PC-9 (cell line): ENCODE measurements at regions of chr2 and their contacts with region 1.

Region 1: DNA sequence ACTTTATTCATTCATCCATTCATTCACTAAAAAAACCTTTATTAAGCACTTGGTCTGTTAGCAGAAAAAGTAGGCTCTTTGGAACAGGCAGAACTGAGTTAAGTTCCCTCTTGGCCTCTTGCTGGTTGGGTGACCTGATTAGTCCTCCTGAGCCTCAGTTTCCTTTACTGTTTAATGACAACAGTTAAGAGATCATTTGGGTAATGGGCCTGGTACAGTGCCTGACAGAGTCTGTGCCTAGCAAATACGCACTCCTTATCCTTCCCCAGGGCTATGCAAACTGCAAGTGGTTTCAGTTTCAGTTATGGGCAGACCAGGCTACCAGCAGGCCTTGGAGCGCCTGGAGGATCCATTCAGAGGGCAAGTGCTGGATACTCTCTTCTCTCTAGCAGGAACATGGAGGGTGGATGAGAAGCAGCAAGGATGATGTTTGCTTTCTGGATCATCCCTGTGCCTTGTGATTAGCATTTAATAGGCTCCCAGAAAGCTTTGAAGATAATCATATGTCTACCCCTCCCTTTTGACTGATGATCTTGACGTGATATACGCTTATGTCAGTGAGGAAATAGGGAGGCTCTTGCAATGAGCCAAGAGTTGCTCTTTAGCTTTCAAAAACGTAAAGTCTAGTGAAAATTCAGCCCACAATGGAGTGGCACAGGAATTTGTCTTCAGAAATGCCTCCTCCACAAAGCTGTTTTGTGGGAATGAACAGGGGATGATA is 12.4 kb upstream of the TAF1B start:
- DNase-seq: peak; percentile 31 to 53
- H3K4me3 ChIP-seq: peak overlapping the region; percentile 41; the same call in 1 of the 2 replicates
- H3K27ac ChIP-seq: peak overlapping the region; percentile 84
- H3K4me1 ChIP-seq: peaks cover 49% of the 10 kb centered on the region
- H3K27me3 ChIP-seq: no peaks in the 10 kb centered on the region
- CTCF ChIP-seq: no peak

Region 2: GRCh38 chr2:9770308-9771100 is 60.3 kb before region 1 on chr2:
- CTCF ChIA-PET with region 1: no interaction called
- POLR2A ChIA-PET with region 1: no interaction called
- intact Hi-C with region 1: no loop called
- DNase-seq: peak; percentile 52 to 67
- H3K4me3 ChIP-seq: no peak overlapping the region
- H3K27ac ChIP-seq: no peak overlapping the region
- H3K4me1 ChIP-seq: no peaks in the 10 kb centered on the region
- H3K27me3 ChIP-seq: no peaks in the 10 kb centered on the region
- CTCF ChIP-seq: peak; percentile 84

Region 3: DNA sequence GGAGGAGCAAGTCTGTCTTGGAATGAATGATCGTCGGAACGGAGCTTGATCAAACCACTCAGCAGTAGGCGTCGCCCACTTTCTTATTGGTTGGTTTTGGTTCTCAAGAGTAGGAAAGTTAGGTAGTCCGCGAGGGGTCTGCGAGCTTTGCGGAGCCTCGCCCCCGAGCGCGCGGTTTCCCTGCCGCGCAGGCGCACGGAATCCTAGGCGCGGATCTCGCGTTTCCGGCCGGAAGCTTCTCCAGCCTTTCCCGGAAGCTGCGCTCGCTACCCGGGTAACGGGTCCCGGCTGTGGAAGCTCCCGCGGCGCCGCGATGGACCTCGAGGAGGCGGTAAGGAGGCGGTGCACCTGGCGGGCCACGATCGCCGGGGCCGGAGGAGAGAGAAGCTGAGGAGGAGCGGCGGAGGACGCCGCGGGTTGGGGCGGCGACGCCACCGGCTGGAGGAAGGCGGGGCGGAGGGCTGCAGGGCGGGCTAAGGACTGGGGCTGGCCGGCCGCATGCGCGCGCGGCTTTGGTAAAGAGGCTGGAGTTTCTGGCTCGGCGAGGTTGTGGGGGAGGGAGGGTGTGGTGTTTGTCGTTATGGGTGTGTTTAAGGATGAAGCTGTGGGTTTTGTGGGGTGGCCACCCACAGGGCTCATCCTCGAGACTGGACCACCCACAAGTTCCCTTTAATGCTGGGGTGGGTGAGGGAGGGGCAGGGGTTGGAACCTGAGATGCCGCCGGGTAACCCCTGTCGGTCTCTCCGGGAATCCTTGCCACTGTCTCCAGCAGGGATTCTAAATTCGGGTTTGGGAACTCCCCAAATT is 12.6 kb after region 1 on chr2 and contains the start of gene TAF1B:
- CTCF ChIA-PET with region 1: no interaction called
- POLR2A ChIA-PET with region 1: interaction called, 4 read pairs
- intact Hi-C with region 1: loop called (anchors 1 kb)
- DNase-seq: peak; percentile 91 to 92
- H3K4me3 ChIP-seq: peak within 1 kb of the TSS; percentile 68
- H3K27ac ChIP-seq: peak within 1 kb of the TSS; percentile 86
- H3K4me1 ChIP-seq: peaks cover 50% of the 10 kb centered on the region
- H3K27me3 ChIP-seq: no peaks in the 10 kb centered on the region
- CTCF ChIP-seq: no peak; the same call in 1 of the 2 replicates
- total RNA-seq, gene TAF1B: 23.8 and 24.8 TPM in 2 replicates

Region 4: GRCh38 chr2:9941196-9941995 is 110.5 kb after region 1 on chr2:
- CTCF ChIA-PET with region 1: no interaction called
- POLR2A ChIA-PET with region 1: no interaction called
- intact Hi-C with region 1: loop called (anchors 1 kb)
- DNase-seq: peak; percentile 80 to 96
- H3K4me3 ChIP-seq: peak overlapping the region; percentile 40; the same call in 1 of the 2 replicates
- H3K27ac ChIP-seq: peak overlapping the region; percentile 97
- H3K4me1 ChIP-seq: peaks cover 74% of the 10 kb centered on the region
- H3K27me3 ChIP-seq: no peaks in the 10 kb centered on the region
- CTCF ChIP-seq: no peak

Region 5: DNA sequence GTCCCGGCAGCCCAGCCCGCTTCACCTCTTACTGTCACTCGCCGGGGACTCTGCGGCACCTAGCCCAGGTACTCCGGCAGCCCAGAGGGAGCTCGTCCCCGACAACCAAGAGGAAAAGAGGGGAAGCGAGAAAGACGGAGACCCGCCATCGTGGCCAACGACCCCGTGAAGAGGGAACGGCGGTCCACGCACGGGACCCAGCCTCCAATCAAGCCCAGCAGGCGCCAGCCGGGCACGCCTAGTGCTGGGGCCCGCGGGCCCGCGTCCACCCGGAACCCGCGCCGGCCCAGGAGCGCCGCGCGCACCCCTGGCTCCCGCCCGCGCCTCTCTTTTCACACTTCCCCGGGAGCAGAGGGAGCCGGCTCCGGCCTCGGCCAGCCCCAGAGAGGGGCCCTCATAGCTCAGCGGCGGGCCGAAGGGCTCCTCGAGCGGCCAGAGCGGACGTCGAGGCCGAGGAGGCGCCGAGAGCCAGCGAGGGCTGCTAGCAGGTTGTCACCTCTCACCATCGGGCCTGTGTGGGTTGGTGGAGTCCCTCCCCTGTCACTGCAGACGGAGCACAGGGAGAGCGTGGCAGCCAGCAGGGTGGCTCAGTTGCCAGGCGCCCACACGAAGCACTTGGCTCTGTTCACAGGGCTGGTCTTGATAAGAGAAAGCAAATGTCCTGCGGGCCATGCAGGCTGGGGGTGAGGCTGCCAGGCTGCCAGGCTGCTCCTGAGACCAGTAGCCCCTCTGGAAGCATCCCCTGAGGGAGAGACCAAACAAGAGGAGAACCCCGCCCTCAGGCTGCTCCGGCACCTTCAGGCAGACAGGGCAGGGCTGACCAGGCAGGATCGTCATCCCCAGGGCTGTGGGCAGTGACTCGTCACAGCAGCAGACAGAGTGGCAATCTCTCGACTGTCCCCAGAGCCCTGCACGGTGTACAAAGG is 175.6 kb after region 1 on chr2:
- CTCF ChIA-PET with region 1: no interaction called
- POLR2A ChIA-PET with region 1: no interaction called
- intact Hi-C with region 1: no loop called
- DNase-seq: peak in 1 of 2 experiments; percentile 11
- H3K4me3 ChIP-seq: no peak overlapping the region
- H3K27ac ChIP-seq: no peak overlapping the region
- H3K4me1 ChIP-seq: no peaks in the 10 kb centered on the region
- H3K27me3 ChIP-seq: no peaks in the 10 kb centered on the region
- CTCF ChIP-seq: no peak

Region 6: GRCh38 chr2:10043906-10044601 is 213.2 kb after region 1 on chr2:
- CTCF ChIA-PET with region 1: no interaction called
- POLR2A ChIA-PET with region 1: interaction called, 17 read pairs
- intact Hi-C with region 1: no loop called
- DNase-seq: peak; percentile 84 to 94
- H3K4me3 ChIP-seq: peak overlapping the region; percentile 59; the same call in 1 of the 2 replicates
- H3K27ac ChIP-seq: peak overlapping the region; percentile 70
- H3K4me1 ChIP-seq: peaks cover 5% of the 10 kb centered on the region
- H3K27me3 ChIP-seq: no peaks in the 10 kb centered on the region
- CTCF ChIP-seq: no peak